RWPE1 (cell line): ENCODE measurements at regions of chr2 and their contacts with region 1.

Region 1: GRCh38 chr2:181715033-181715630 is 34.8 kb upstream of the NEUROD1 start:
- DNase-seq: peak; percentile 35
- H3K27ac ChIP-seq: no peak overlapping the region
- CTCF ChIP-seq: peak; percentile 69

Region 2: GRCh38 chr2:181104512-181105115 is 610.5 kb before region 1 on chr2:
- CTCF ChIA-PET with region 1: interaction called, 15 read pairs
- POLR2A ChIA-PET with region 1: no interaction called
- DNase-seq: peak; percentile 38
- H3K27ac ChIP-seq: no peak overlapping the region
- CTCF ChIP-seq: peak; percentile 44

Region 3: GRCh38 chr2:181573140-181573736 is 141.9 kb before region 1 on chr2:
- CTCF ChIA-PET with region 1: interaction called, 50 read pairs
- POLR2A ChIA-PET with region 1: no interaction called
- DNase-seq: peak; percentile 41
- H3K27ac ChIP-seq: no peak overlapping the region
- CTCF ChIP-seq: peak; percentile 44

Region 4: DNA sequence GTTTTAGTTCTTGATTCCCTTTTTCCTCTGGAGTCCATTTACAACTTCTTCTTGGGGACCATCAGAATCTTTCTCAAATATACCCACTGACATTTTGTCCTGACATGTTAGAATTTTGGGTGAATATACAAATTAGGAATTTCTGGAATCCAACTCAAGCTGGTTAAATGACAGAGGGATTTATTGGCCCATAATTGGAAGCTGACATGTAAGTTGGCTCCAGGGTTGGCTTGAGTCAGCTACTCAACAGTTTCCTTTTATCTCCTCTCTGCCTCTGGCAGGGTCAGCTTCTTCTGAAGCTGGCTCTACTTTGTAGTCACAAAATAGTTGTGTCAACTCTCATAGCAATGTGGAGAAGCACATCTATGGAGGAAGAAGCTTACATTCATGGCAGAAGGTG is 233.9 kb after region 1 on chr2:
- CTCF ChIA-PET with region 1: no interaction called
- POLR2A ChIA-PET with region 1: no interaction called
- DNase-seq: peak; percentile 50
- H3K27ac ChIP-seq: no peak overlapping the region
- CTCF ChIP-seq: no peak